ENCODE measurements at regions of chr2 and their contacts with region 1.

Region 1: DNA sequence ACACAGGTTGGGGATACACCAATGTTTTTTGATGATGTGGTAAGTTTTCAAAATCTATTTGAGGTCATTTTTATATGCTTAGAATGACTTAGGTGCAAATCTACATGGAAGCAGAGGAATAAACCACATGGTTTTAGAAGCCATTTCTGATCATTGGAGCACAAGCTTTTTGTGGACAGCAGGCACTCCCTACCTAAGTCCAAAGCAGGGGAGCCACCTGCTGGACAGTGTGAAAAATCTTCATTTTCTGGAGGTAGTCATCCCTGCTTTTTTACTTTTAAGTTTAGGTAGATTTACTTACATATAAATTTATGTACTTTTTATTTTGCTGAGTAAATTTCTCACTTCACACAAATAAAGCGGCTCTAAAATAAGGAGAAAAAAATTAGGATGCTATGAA is 323.2 kb downstream of the PLCL1 start:
- DNase-seq: peak; percentile 59
- H3K4me3 Mint-ChIP-seq: no peak overlapping the region
- H3K27ac Mint-ChIP-seq: no peak overlapping the region
- H3K4me1 Mint-ChIP-seq: no peaks in the 10 kb centered on the region
- H3K27me3 Mint-ChIP-seq: no peaks in the 10 kb centered on the region

Region 2: DNA sequence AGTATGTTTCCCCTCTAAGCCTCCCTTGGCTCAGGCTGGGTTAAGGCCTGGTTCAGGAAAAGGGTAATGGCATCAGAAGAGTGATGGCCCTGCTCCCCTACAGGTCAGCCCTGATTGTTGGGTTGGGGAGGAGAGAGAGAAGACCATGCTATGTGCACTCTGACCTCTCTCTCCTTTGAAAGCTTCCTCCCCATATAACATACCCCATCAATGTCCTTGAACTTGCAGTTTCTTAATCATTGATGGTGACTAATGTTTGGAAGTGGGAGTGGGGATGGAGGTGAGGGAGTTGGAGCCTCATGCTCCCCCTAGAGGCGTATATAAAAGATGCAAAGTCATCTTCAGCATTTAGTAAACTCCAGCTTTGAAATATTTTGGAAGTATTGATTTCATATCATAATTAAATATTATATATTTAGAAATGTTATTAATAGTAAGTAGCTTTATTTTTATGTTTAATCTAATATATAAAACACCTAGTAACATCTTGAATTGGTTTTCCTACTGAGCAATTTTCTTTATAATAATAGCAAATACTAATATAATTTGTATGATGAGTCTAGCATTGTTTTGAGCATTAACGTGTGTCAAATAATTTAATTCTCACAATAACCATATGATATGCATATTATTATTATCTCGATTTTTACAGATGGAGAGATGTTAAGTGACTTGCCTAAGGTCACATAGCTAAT is 314.4 kb before region 1 on chr2:
- CTCF ChIA-PET with region 1: interaction called, 20 read pairs
- POLR2A ChIA-PET with region 1: no interaction called
- intact Hi-C with region 1: no loop called
- DNase-seq: no peak
- H3K4me3 Mint-ChIP-seq: no peak overlapping the region
- H3K27ac Mint-ChIP-seq: no peak overlapping the region
- H3K4me1 Mint-ChIP-seq: peaks cover 28% of the 10 kb centered on the region
- H3K27me3 Mint-ChIP-seq: no peaks in the 10 kb centered on the region

Region 3: DNA sequence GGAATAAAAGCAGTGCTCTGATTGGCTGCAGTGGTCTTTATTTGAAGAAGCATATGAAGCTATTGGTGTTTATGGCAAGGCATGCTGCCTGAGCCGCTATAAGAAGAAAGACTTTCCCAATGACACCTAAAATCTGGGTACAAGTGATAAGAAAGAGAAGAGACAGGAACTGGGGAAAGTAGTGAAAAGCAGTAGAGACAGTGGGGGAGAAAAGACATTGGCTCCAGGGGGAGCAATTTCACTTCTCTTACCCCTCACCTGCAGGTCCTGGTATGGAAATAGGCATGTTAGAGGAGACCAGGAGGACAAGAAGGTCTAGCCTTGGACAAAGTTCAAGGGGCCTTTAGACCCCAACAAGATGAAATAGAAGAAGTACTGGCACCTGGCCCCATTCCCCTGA is 276.2 kb before region 1 on chr2:
- CTCF ChIA-PET with region 1: interaction called, 5 read pairs
- POLR2A ChIA-PET with region 1: no interaction called
- intact Hi-C with region 1: loop called (anchors 1 kb)
- DNase-seq: no peak
- H3K4me3 Mint-ChIP-seq: no peak overlapping the region
- H3K27ac Mint-ChIP-seq: no peak overlapping the region
- H3K4me1 Mint-ChIP-seq: peaks cover 56% of the 10 kb centered on the region
- H3K27me3 Mint-ChIP-seq: no peaks in the 10 kb centered on the region

Region 4: DNA sequence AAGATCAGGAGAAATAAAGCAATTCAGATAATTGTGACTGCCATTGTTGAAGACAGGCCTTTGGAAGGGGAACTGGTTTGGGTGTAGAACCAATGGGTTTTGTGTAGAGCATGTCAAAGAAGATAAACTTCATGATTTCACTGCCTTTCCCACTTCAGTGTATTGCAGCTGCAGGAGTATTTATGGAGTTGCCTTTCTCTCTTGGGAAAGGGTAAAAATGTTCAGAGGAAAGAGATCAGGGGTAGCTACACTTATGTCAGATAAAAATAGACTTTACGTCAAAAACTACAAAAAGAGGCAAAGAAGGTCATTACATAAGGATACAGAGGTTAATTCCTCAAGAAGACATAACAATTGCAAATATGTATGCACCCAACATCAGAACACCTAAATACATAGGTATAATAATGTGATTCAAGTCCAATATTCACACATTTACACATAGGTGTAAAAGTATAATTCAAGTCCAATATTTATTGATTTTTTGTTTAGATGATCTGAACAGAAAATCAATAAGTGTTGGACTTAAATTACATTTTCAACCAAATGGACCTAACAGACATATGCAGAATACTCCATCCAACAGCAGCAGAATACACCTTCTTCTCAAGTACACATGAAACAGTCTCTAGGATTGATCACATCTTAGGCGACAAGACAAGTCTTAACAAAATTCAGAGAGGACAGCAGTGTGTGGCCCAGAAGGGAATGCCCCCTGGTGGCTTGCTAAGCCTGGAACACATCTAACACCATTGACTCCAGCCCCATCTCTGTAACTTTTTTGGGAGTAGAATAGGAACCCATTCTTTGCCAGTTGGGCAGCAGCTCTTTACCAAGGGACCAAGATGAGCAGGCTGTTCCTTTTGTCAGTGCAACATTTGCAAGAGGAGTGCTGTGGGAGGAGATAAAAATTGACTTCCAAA is 73.6 kb before region 1 on chr2:
- CTCF ChIA-PET with region 1: interaction called, 4 read pairs
- POLR2A ChIA-PET with region 1: no interaction called
- intact Hi-C with region 1: loop called (anchors 5 kb)
- DNase-seq: peak; percentile 62
- H3K4me3 Mint-ChIP-seq: no peak overlapping the region
- H3K27ac Mint-ChIP-seq: no peak overlapping the region
- H3K4me1 Mint-ChIP-seq: peaks cover 2% of the 10 kb centered on the region
- H3K27me3 Mint-ChIP-seq: no peaks in the 10 kb centered on the region

Region 5: GRCh38 chr2:198116756-198117155 is 10.9 kb before region 1 on chr2:
- CTCF ChIA-PET with region 1: interaction called, 12 read pairs
- POLR2A ChIA-PET with region 1: no interaction called
- intact Hi-C with region 1: no loop called
- DNase-seq: no peak
- H3K4me3 Mint-ChIP-seq: no peak overlapping the region
- H3K27ac Mint-ChIP-seq: no peak overlapping the region
- H3K4me1 Mint-ChIP-seq: no peaks in the 10 kb centered on the region
- H3K27me3 Mint-ChIP-seq: no peaks in the 10 kb centered on the region

Region 6: GRCh38 chr2:198186255-198186654 is 58.6 kb after region 1 on chr2:
- CTCF ChIA-PET with region 1: no interaction called
- POLR2A ChIA-PET with region 1: no interaction called
- intact Hi-C with region 1: loop called (anchors 2 kb)
- DNase-seq: no peak
- H3K4me3 Mint-ChIP-seq: no peak overlapping the region
- H3K27ac Mint-ChIP-seq: no peak overlapping the region
- H3K4me1 Mint-ChIP-seq: no peaks in the 10 kb centered on the region
- H3K27me3 Mint-ChIP-seq: peaks cover 7% of the 10 kb centered on the region

Region 7: GRCh38 chr2:198296665-198297308 is 169.2 kb after region 1 on chr2:
- CTCF ChIA-PET with region 1: interaction called, 6 read pairs
- POLR2A ChIA-PET with region 1: no interaction called
- intact Hi-C with region 1: loop called (anchors 1 kb)
- DNase-seq: peak; percentile 67
- H3K4me3 Mint-ChIP-seq: no peak overlapping the region
- H3K27ac Mint-ChIP-seq: no peak overlapping the region
- H3K4me1 Mint-ChIP-seq: peaks cover 2% of the 10 kb centered on the region
- H3K27me3 Mint-ChIP-seq: peaks cover 9% of the 10 kb centered on the region